SK-N-SH (cell line): ENCODE measurements at regions of chr3 and their contacts with region 1.

Region 1: GRCh38 chr3:112642912-112643506 is 2.1 kb upstream of the CCDC80 start:
- DNase-seq: peak; percentile 85
- H3K4me3 ChIP-seq: peak overlapping the region; percentile 13 to 14; a peak in 2 of 4 replicates
- H3K27ac ChIP-seq: peak overlapping the region; percentile 71 to 96
- H3K4me1 ChIP-seq: peaks cover 16 to 36% of the 10 kb centered on the region in 2 experiments
- H3K27me3 ChIP-seq: no peaks in the 10 kb centered on the region
- CTCF ChIP-seq: peak; percentile 94
- EP300 ChIP-seq: 0 out of 4 replicates have a peak, but pooled peaks of 1 of the 2 experiments have one; percentile 25
- RAD21 ChIP-seq: peak; percentile 96

Region 2: GRCh38 chr3:111151438-111151837 is 1491.6 kb before region 1 on chr3:
- CTCF ChIA-PET with region 1: no interaction called
- POLR2A ChIA-PET with region 1: no interaction called
- DNase-seq: no peak
- H3K4me3 ChIP-seq: no peak overlapping the region
- H3K27ac ChIP-seq: no peak overlapping the region
- H3K4me1 ChIP-seq: peaks cover 0 to 8% of the 10 kb centered on the region in 2 experiments; a peak in 1 of 4 replicates
- H3K27me3 ChIP-seq: no peaks in the 10 kb centered on the region
- CTCF ChIP-seq: peak; percentile 9; the same call in 1 of the 2 replicates
- EP300 ChIP-seq: no peak
- RAD21 ChIP-seq: no peak

Region 3: DNA sequence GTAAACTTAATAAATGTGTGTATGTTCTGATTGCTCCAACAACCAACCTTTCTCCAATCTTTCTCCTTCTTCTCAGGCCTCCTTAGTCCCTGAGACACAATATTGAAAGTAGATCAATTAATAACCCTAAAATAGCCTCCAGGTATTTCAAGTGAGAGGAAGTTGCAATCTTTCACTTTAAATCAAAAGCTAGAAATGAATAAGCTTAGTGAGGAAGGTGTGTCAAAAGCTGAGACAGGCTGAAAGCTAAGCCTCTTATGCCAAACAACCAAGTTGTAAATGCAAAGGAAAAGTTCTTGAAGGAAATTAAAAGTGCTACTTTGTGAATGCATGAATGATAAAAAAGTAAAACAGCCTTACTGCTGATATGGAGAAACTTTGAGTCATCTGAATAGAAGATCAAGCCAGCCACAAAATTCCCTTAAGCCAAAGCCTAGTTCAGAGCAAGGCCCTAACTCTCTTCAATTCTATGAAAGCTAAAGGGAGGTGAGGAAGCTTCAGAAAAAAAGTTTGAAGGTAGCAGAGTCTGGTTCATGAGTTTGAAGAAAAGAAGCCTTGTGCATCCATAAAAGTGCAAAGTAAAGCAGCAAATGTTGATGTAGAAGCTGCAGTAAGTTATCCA is 40.7 kb before region 1 on chr3:
- CTCF ChIA-PET with region 1: interaction called, 10 read pairs
- POLR2A ChIA-PET with region 1: no interaction called
- DNase-seq: no peak
- H3K4me3 ChIP-seq: no peak overlapping the region
- H3K27ac ChIP-seq: no peak overlapping the region
- H3K4me1 ChIP-seq: peaks cover 4 to 5% of the 10 kb centered on the region in 2 experiments; a peak in 3 of 4 replicates
- H3K27me3 ChIP-seq: no peaks in the 10 kb centered on the region
- CTCF ChIP-seq: no peak
- EP300 ChIP-seq: no peak
- RAD21 ChIP-seq: no peak

Region 4: DNA sequence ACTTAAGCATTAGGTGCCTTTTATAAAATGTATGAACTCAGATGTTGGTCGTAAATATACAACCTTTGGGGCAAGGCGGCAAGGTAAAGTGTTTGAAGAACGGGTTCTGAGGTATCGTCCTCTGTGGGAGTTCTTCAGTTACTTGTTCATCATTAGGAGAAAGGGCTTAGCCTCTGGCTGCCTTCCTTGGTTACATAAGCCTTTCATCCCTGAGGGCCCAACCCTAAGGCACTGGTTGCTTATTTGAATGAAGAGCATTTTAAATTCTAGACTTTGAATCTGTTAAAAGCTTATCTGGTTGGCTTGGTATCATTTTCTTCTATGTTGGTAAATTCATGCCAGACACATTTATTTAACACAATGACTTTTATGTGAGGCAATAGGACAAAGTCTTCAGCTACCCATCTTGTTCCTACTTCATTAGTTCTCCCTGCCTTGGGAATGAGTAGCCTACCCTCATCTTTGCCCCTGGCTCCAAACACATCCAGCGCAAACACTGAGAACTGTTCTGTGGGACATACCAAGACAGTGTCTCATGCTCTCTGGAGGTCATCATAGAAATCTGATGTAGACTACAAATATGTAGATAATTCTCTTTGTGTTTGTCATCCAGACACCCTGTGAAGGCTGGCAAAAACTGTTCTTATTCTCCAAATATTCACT is 10.3 kb after region 1 on chr3:
- CTCF ChIA-PET with region 1: interaction called, 26 read pairs
- POLR2A ChIA-PET with region 1: no interaction called
- DNase-seq: no peak
- H3K4me3 ChIP-seq: peak overlapping the region in 1 of 2 experiments; percentile 31; a peak in 2 of 4 replicates
- H3K27ac ChIP-seq: peak overlapping the region; percentile 77 to 99; a peak in 3 of 4 replicates
- H3K4me1 ChIP-seq: peaks cover 0 to 49% of the 10 kb centered on the region in 2 experiments; a peak in 3 of 4 replicates
- H3K27me3 ChIP-seq: no peaks in the 10 kb centered on the region
- CTCF ChIP-seq: no peak
- EP300 ChIP-seq: peak; percentile 53 to 96; a peak in 3 of 4 replicates
- RAD21 ChIP-seq: no peak

Region 5: DNA sequence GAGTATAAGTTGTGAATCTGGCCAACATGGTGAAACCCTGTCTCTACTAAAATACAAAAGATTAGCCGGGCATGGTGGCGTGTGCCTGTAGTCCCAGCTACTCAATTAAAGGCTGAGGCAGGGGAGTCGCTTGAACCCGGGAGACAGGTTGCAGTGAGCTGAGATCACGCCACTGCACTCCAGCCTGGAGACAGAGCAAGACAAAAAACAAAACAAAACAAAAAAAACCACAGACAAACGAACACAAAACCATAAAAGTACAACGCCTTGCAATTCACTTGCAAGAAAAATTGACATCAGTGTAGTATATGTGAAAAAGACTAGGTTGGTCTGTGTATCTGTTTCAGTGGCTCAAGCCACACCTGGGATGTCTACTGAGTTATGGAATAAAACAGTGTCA is 27.8 kb after region 1 on chr3:
- CTCF ChIA-PET with region 1: no interaction called
- POLR2A ChIA-PET with region 1: no interaction called
- DNase-seq: no peak
- H3K4me3 ChIP-seq: no peak overlapping the region
- H3K27ac ChIP-seq: peak overlapping the region; percentile 39 to 94; a peak in 3 of 4 replicates
- H3K4me1 ChIP-seq: peaks cover 6 to 35% of the 10 kb centered on the region in 2 experiments
- H3K27me3 ChIP-seq: no peaks in the 10 kb centered on the region
- CTCF ChIP-seq: no peak
- EP300 ChIP-seq: no peak
- RAD21 ChIP-seq: no peak

Region 6: DNA sequence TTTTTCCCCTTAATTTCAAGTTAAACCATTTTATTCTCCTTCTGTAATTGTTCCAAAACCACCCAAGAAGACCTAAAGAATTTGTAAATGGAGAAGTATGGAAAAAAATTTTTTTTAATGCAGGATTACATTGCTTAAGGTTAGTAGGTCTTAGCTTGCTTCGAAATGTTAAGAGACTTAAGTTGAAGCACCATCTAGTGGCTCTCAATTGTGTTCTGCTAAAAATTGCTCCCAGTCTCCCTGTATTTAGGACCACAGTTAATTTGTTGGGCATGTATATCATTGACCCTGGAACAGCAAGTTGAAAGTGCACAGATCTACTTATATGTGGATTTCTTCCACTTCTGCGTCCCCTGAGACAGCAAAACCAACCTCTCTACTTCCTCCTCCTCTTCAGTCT is 171.3 kb after region 1 on chr3:
- CTCF ChIA-PET with region 1: interaction called, 10 read pairs
- POLR2A ChIA-PET with region 1: no interaction called
- DNase-seq: no peak
- H3K4me3 ChIP-seq: no peak overlapping the region
- H3K27ac ChIP-seq: peak overlapping the region; percentile 15 to 39; a peak in 2 of 4 replicates
- H3K4me1 ChIP-seq: peaks cover 6 to 14% of the 10 kb centered on the region in 2 experiments; a peak in 3 of 4 replicates
- H3K27me3 ChIP-seq: no peaks in the 10 kb centered on the region
- CTCF ChIP-seq: peak; percentile 68
- EP300 ChIP-seq: no peak
- RAD21 ChIP-seq: peak; percentile 71

Region 7: GRCh38 chr3:112984485-112984884 is 341.5 kb after region 1 on chr3:
- CTCF ChIA-PET with region 1: interaction called, 97 read pairs
- POLR2A ChIA-PET with region 1: no interaction called
- DNase-seq: no peak
- H3K4me3 ChIP-seq: no peak overlapping the region
- H3K27ac ChIP-seq: no peak overlapping the region
- H3K4me1 ChIP-seq: no peaks in the 10 kb centered on the region
- H3K27me3 ChIP-seq: no peaks in the 10 kb centered on the region
- CTCF ChIP-seq: no peak
- EP300 ChIP-seq: no peak
- RAD21 ChIP-seq: no peak